GM12878 (cell line): ENCODE measurements at regions of chr3 and their contacts with region 1.

Region 1: DNA sequence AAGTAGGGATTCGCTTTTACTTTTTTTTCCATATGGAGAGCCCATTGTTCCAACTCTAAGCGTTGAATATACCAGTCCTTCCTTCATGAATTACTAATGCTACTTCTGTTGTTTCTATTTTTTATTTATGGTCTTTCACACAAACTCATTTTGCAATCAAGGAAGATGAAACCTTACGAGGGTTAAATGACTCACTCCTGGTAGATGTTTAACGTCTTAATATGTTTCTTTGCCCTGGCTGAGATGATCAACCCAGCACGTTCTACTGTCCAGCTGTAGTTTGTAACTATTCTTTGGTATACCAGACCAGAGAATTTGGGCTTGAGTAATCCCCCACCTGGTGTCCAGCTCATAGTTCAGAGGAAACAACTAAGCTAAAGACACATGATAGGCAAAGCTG is 23.1 kb downstream of the CDCP1 start:
- DNase-seq: peak; percentile 62
- ATAC-seq: peak; percentile 91
- H3K4me3 ChIP-seq: no peak overlapping the region
- H3K27ac ChIP-seq: no peak overlapping the region
- H3K4me1 ChIP-seq: no peaks in the 10 kb centered on the region
- H3K27me3 ChIP-seq: no peaks in the 10 kb centered on the region
- CTCF ChIP-seq: 0 out of 6 replicates have a peak, but pooled peaks of 1 of the 3 experiments have one; percentile 1
- EP300 ChIP-seq: peak; percentile 27 to 50; a peak in 2 of 4 replicates
- POLR2A ChIP-seq: no peak
- RAD21 ChIP-seq: no peak

Region 2: DNA sequence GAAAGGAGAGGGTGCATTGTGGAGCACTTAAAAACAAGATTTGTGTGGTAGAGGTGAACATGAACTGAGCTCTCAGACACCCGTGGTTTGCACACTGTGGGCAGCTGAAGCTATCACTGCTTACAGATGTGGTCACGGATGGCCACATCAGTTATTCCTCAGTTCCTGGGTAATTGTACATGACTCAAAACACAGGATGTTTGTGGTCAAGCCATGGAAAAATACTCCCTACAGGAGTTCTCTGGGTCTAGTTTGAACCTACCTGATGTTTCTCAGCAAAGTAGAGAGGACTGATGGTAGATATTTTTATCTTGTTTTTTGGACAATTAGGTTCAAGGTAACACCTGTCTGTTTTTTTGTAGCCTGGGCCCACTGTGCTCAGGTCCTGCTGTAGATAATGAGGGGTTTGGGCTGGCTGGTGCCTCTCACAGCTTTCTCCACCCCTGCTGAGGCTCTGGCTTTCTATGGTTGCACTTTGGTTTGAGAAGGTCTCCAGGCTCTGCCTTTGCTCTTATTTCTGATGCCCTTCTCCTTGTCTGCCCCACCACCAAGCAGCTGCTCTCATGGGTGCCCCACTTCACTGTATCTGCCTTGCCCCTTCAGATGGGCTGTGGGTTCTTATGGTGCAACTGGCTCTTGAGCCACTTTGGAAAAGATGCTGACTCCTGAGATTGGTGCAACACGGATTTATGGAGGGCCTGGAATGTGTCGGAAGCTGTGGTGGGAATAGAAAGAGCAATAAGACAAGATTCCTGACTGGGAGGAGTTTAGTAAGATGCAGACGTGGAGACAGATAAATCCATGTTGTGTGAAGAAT is 17.0 kb before region 1 on chr3:
- CTCF ChIA-PET with region 1: interaction called, 6 read pairs
- POLR2A ChIA-PET with region 1: interaction called, 4 read pairs
- RAD21 ChIA-PET with region 1: interaction called, 16 read pairs
- SMC1A ChIA-PET with region 1: interaction called, 34 read pairs
- in situ Hi-C with region 1: no loop called
- intact Hi-C with region 1: no loop called
- DNase-seq: no peak
- ATAC-seq: peak; percentile 76
- H3K4me3 ChIP-seq: no peak overlapping the region
- H3K27ac ChIP-seq: no peak overlapping the region
- H3K4me1 ChIP-seq: peaks cover 3% of the 10 kb centered on the region; the same call in 1 of the 2 replicates
- H3K27me3 ChIP-seq: no peaks in the 10 kb centered on the region; a peak in 1 of 4 replicates
- CTCF ChIP-seq: no peak
- EP300 ChIP-seq: peak in 1 of 2 experiments; percentile 61; a peak in 1 of 4 replicates
- POLR2A ChIP-seq: no peak
- RAD21 ChIP-seq: no peak

Region 3: DNA sequence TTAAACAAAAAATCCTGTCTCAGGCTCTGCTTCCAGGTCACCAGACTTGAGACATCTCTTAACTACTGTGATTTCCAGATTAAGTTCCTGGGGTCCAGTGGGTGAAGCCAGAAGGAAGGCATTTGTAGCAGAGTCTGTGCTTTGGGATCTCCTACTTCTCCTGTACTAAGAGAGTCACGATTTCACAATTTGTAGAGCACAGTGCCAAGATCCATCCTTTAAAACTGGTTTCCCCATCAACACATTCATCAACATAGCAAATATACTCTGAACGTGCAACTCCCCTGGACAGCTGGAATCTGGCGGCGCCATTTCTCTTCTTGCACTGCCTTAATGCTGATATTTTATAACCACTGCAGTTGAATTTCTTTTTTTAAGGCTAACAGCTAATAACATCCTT is 10.1 kb before region 1 on chr3:
- CTCF ChIA-PET with region 1: interaction called, 11 read pairs
- POLR2A ChIA-PET with region 1: interaction called, 3 read pairs
- RAD21 ChIA-PET with region 1: interaction called, 16 read pairs
- SMC1A ChIA-PET with region 1: interaction called, 34 read pairs
- in situ Hi-C with region 1: no loop called
- intact Hi-C with region 1: no loop called
- DNase-seq: no peak
- ATAC-seq: no peak
- H3K4me3 ChIP-seq: no peak overlapping the region
- H3K27ac ChIP-seq: no peak overlapping the region
- H3K4me1 ChIP-seq: peaks cover 3% of the 10 kb centered on the region; the same call in 1 of the 2 replicates
- H3K27me3 ChIP-seq: no peaks in the 10 kb centered on the region
- CTCF ChIP-seq: no peak
- EP300 ChIP-seq: no peak
- POLR2A ChIP-seq: no peak
- RAD21 ChIP-seq: no peak

Region 4: DNA sequence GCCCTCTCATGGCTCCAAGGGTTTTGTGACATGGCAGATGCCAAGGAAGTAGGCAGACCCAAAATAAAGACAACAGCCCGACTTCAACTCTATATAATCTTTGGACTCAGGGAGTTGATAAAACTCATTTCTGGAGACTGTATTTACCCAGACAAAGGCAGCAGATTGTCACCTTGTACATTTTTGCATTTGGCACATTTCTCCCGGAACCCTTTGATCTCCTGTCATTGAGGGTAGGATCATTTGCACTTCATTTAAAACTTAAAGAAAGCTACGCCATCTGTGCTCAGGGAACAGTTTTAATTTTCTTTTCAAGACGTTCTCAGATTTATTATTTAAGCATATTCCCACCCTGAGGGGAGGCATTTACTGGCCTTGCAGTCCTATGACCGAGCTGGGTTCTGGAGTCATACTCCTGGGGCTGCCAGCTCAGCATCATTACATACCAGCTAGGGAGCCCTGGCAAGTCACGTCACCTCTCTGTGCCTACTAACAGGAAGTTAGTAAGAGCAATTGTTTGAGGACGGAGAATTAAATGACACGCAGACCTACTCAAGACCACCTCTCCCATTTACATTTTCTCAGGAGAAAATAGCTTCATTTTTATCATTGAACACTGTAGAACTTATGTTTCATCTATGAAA is 17.2 kb after region 1 on chr3:
- CTCF ChIA-PET with region 1: interaction called, 5 read pairs
- POLR2A ChIA-PET with region 1: interaction called, 6 read pairs
- RAD21 ChIA-PET with region 1: interaction called, 5 read pairs
- SMC1A ChIA-PET with region 1: interaction called, 16 read pairs
- in situ Hi-C with region 1: no loop called
- intact Hi-C with region 1: no loop called
- DNase-seq: no peak
- ATAC-seq: no peak
- H3K4me3 ChIP-seq: no peak overlapping the region
- H3K27ac ChIP-seq: no peak overlapping the region
- H3K4me1 ChIP-seq: no peaks in the 10 kb centered on the region
- H3K27me3 ChIP-seq: 0 out of 4 replicates have a peak, but pooled peaks cover 0 to 3% of the 10 kb centered on the region in 2 experiments
- CTCF ChIP-seq: no peak
- EP300 ChIP-seq: no peak
- POLR2A ChIP-seq: no peak
- RAD21 ChIP-seq: no peak

Region 5: GRCh38 chr3:45210308-45211041 is 87.4 kb after region 1 on chr3:
- CTCF ChIA-PET with region 1: interaction called, 10 read pairs
- POLR2A ChIA-PET with region 1: no interaction called
- RAD21 ChIA-PET with region 1: interaction called, 6 read pairs
- SMC1A ChIA-PET with region 1: interaction called, 7 read pairs
- in situ Hi-C with region 1: no loop called
- intact Hi-C with region 1: no loop called
- DNase-seq: no peak
- ATAC-seq: peak; percentile 98
- H3K4me3 ChIP-seq: no peak overlapping the region
- H3K27ac ChIP-seq: no peak overlapping the region
- H3K4me1 ChIP-seq: no peaks in the 10 kb centered on the region
- H3K27me3 ChIP-seq: peaks cover 2 to 3% of the 10 kb centered on the region in 2 experiments; a peak in 3 of 4 replicates
- CTCF ChIP-seq: peak; percentile 60 to 75 (median 70); a peak in 5 of 6 replicates
- EP300 ChIP-seq: no peak
- POLR2A ChIP-seq: no peak
- RAD21 ChIP-seq: peak; percentile 44